ENCODE measurements at regions of chr5 and their contacts with region 1.

Region 1: DNA sequence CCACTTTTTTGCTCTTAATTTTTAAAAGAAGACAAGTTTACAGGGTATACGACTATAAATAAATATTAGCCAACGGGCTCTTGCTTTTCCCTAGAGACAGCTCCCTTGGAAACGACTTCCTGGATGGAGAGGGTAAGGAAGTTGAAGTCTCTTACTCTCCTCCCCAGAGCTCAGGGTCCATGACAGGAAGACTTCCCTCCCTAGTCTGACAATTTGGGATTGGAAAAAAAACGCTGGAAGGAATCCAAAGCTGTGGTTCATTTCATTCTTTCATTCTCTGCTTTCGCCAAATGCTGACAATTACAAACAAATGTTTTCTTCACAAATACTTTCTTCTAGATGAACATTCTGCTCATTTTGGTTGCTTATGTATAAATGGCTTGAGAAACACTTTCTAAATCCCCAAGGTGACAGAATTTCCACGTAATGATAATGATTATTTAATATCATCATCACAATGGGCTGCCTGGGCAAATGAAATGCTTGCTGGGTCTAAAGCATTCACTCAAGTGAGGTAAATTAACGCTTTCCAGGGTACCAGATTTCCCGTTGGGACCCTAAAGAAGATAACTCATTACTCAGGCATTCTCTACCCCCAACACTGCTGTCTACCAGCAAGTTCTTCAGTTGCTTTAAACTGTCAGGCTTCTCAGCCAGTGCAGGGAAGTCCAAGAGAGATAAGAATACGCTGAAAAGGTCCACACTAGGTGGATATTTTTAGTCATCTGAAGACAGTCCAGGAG is 139.8 kb upstream of the SLC30A5 start:
- DNase-seq: peak in 1 of 5 donors; percentile 60
- ATAC-seq: peak in 3 of 4 donors; percentile 77 to 85 (median 82)
- H3K4me3 ChIP-seq: no peak overlapping the region
- H3K27ac ChIP-seq: peak overlapping the region in 5 of 12 donors; percentile 11 to 40 (median 24)
- H3K4me1 ChIP-seq: peaks cover 0 to 48% (median 21%) of the 10 kb centered on the region in 12 donors
- H3K27me3 ChIP-seq: no peaks in the 10 kb centered on the region
- CTCF ChIP-seq: no peak
- POLR2A ChIP-seq: no peak

Region 2: DNA sequence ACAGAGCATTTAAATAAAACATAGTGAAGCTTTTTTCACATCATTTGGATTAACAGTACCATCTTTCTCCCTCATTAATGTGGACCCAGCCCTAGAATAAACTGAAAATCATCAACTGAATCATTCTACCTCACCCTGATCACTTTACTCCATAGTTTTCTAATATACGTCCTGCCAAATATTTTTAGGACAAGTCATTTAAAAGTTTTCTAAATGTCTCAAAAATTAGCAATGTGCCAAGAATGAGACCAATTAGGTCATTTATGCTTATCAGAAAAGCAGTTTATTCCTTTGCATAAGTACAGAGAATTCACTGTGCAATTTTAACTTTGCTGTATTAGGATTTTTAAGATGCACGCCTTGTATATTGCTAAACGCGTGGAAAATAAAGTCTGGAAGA is 454.1 kb before region 1 on chr5:
- intact Hi-C with region 1: loop called in 1 of 10 experiments (anchors 10 kb)
- DNase-seq: no peak
- ATAC-seq: no peak
- H3K4me3 ChIP-seq: no peak overlapping the region
- H3K27ac ChIP-seq: no peak overlapping the region
- H3K4me1 ChIP-seq: peaks cover 0 to 3% (median 0%) of the 10 kb centered on the region in 12 donors
- H3K27me3 ChIP-seq: no peaks in the 10 kb centered on the region
- CTCF ChIP-seq: no peak
- POLR2A ChIP-seq: no peak

Region 3: GRCh38 chr5:68562308-68562707 is 391.7 kb before region 1 on chr5:
- intact Hi-C with region 1: no loop called
- DNase-seq: peak in 4 of 5 donors; percentile 32 to 60 (median 42)
- ATAC-seq: peak; percentile 75 to 89 (median 82)
- H3K4me3 ChIP-seq: no peak overlapping the region
- H3K27ac ChIP-seq: no peak overlapping the region
- H3K4me1 ChIP-seq: peaks cover 0 to 7% (median 4%) of the 10 kb centered on the region in 12 donors
- H3K27me3 ChIP-seq: no peaks in the 10 kb centered on the region
- CTCF ChIP-seq: no peak
- POLR2A ChIP-seq: no peak

Region 4: DNA sequence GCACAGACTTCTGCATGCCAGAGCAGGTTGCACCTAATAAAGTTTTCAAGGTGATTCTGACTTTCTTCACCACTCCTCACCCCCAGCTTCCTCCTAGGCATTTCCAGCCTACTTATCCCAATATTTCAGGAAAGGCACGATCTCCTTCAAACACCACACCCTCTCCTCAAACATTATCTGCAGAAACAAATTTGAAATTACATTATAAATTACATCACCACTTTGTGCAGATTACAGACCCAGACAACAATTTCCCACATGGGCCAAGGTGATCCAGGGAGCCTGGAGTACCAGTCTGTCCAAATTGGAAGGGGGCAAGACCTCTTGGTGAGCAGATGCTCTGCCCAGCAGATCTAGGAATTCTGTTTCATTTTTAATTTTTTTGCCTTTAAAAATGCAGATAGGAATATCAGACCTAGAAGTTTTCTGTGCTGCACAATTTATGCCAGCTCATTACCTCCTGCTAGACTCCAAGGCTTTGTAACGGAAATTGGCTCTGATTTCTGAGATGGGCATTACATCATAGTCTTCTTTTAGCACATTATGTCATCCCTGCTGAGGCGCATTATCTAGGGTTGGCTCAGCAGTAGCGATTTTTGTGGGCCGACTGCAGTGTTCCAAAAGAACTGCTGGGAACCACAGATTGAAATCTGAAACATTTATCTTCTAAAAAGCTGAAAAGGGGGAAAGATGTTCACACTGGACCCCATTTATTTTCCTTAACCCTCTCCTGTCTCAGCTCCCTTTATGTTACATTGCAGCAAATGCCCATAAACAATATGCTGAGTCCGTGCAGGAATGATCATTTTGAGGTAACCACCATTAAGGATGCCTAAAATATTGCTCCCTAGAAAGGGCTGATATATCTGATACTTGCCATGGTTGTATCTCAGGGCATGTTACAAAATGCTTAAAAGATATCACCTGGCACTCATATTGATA is 223.4 kb before region 1 on chr5:
- intact Hi-C with region 1: loop called in 1 of 10 experiments (anchors 5 kb)
- DNase-seq: peak in 4 of 5 donors; percentile 40 to 63 (median 49)
- ATAC-seq: peak; percentile 89 to 96 (median 92)
- H3K4me3 ChIP-seq: peak overlapping the region in 1 of 12 donors; percentile 2
- H3K27ac ChIP-seq: peak overlapping the region in 9 of 12 donors; percentile 35 to 87 (median 65)
- H3K4me1 ChIP-seq: peaks cover 0 to 28% (median 16%) of the 10 kb centered on the region in 12 donors
- H3K27me3 ChIP-seq: no peaks in the 10 kb centered on the region
- CTCF ChIP-seq: no peak
- POLR2A ChIP-seq: no peak

Measured in heart left ventricle (tissue), 16 donors.